Aorta (tissue), 5 donors: ENCODE measurements at regions of chr21 and their contacts with region 1.

Region 1: GRCh38 chr21:29342363-29342957 is 43.7 kb downstream of the BACH1 start:
- DNase-seq: peak; percentile 70 to 85
- ATAC-seq: peak; percentile 79
- H3K4me3 ChIP-seq: peak overlapping the region in 1 of 2 donors; percentile 38
- H3K27ac ChIP-seq: peak overlapping the region in 1 of 2 donors; percentile 58
- H3K4me1 ChIP-seq: peaks cover 5 to 13% of the 10 kb centered on the region in 2 donors
- H3K27me3 ChIP-seq: no peaks in the 10 kb centered on the region

Region 2: DNA sequence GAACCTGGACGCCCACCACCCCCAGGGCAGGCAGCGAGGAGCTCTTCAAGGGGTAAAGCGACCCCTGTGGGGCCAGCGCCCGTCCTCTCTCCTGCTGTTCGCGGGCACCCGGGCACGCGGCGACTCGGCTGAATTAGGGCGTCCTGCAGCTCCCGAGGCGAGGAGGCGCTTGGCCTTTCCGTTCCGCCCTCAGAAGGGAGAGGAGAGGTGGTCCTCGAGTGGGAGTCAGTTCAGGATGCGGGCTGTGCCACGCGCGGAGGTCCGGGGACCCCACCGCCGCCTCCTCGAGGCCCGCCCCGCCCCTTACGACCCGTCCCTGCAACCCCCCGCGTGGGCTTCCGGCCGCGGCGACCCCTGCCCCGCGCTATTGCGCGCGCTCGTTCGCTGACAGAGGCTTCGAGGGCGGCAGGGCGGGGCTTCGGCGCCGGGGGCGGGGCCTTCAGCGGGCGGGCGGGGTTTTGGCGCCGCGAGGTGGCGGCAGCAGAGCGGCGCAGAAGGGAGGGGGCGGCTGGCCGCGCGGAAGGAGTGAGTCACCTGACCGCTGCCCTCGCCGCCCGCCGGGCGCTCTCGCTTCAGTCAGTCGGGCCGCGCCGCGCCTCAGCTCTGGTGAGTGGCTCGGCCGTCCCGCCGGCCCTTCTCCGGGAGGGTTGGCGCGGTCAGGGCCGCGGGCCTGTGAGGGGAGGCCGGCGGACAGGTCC is 44.0 kb before region 1 on chr21 and contains the start of gene BACH1:
- intact Hi-C with region 1: loop called (anchors 5 kb)
- DNase-seq: peak; percentile 95 to 97
- ATAC-seq: peak; percentile 96
- H3K4me3 ChIP-seq: peak within 1 kb of the TSS; percentile 70 to 88
- H3K27ac ChIP-seq: peak within 1 kb of the TSS; percentile 59 to 71
- H3K4me1 ChIP-seq: peaks cover 6 to 12% of the 10 kb centered on the region in 2 donors
- H3K27me3 ChIP-seq: no peaks in the 10 kb centered on the region
- total RNA-seq, gene BACH1: 90.1 to 103 TPM